ENCODE measurements at regions of chr17 and their contacts with region 1.

Region 1: DNA sequence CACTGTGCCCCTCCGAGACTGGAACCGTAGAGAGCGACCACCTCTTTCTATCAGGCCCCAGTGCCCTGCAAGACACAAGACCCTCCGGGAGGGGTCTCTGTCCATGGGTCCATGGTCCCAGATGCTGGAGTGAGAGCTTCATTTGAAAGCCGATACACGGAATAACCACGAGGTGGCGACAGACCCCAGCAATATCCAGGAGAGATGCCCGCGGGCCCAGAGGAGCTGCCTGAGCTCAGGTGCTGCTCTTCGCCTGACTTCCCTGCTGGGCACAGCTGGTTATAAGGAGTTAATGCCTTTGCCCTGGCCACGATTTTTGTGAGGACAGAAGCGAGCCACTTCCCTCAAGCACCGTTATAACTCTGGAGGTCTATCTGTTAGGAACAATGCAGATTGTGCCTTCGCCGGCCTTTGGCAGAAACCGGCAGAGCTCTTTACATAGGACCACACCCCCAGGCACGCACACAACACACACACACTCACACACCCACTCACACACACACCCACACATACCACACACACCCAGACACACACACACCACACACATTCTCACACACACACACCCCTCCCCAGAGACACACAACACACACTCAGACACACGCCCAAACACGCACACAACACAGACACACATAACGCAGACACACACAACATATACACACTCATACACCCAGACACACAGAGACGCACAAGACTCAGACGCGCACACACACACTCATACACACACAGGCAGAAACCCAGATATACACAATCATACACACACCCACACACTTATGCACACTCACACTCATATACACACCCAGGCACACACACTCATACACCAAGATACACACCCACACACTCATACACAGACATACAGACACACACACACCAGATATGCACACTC is 436.4 kb downstream of the SOX9 start:
- DNase-seq: no peak
- H3K4me3 ChIP-seq: no peak overlapping the region
- H3K27ac ChIP-seq: no peak overlapping the region
- H3K27me3 ChIP-seq: no peaks in the 10 kb centered on the region
- CTCF ChIP-seq: peak; percentile 91

Region 2: DNA sequence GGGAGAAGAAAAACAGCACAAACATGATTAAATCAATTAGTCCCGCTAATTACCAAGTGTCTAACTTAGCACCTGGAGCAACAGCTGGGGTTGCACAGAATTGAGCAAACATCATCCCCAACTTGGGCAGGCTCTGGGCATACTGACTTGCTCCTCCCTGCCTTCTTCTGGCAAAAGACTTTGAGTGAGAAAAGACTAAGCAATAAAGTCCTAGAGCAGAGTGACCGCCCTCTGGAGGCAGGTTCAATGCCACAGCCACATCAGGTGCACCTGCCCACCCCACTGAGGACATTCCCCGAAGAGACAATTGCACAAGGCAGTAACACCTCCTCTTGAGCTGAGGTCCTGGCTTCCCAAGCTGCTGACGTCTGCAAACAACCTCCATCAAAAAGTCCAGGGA is 78.1 kb before region 1 on chr17:
- CTCF ChIA-PET with region 1: no interaction called
- POLR2A ChIA-PET with region 1: no interaction called
- DNase-seq: no peak
- H3K4me3 ChIP-seq: no peak overlapping the region
- H3K27ac ChIP-seq: no peak overlapping the region
- H3K27me3 ChIP-seq: peaks cover 2% of the 10 kb centered on the region
- CTCF ChIP-seq: no peak

Region 3: DNA sequence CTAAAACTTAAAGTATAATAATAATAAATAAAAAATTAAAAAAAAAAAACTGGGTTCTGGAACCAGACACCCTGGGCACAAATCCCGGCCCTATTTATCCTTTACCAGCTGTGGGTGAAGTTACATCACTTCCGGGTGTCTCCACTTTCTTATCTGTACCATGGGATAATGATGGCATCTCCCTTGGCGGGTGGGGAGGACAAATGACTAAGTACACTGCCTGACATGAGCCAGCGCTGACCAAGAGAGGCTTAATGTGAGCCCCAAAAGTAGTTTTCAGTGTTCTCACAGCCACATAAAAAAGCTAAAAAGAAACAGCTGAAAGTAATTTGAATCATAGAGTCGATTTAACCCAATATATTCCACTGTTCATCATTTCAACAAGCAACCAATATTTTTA is 11.4 kb before region 1 on chr17:
- CTCF ChIA-PET with region 1: interaction called, 13 read pairs
- POLR2A ChIA-PET with region 1: no interaction called
- DNase-seq: no peak
- H3K4me3 ChIP-seq: no peak overlapping the region
- H3K27ac ChIP-seq: no peak overlapping the region
- H3K27me3 ChIP-seq: no peaks in the 10 kb centered on the region
- CTCF ChIP-seq: no peak

Region 4: GRCh38 chr17:72580321-72581127 is 23.3 kb after region 1 on chr17:
- CTCF ChIA-PET with region 1: interaction called, 26 read pairs
- POLR2A ChIA-PET with region 1: no interaction called
- DNase-seq: no peak
- H3K4me3 ChIP-seq: no peak overlapping the region
- H3K27ac ChIP-seq: no peak overlapping the region
- H3K27me3 ChIP-seq: no peaks in the 10 kb centered on the region
- CTCF ChIP-seq: no peak

Region 5: DNA sequence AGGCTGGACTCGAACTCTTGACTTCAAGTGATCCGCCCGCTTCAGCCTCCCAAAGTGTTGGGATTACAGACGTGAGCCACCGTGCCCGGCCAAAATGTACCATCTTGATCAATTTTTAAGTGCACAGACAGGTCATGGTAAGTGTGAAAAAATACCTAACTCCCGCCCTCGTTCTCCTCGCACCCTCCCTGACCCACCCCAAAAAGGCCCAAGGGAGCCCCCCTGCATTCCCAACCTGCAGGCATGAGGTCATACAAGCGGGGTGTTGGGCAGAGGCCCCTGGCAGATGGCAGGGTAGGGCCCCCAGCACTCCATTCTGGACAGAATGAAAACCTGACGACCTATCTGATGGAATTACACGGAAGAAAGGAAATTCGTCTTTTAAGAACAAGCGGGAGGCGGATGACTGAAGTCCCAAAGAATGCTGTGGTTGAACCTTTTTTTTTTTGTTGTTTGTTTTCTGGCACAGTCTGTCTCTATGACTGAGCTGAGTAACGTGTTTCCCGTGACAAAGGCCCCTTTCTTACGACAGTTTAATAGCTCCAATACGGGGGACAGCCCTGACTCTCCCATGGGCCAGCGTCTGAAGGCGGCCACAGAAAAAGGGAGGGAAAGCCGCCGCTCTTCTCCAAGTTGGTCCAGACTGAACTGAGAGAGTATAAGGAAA is 158.9 kb after region 1 on chr17:
- CTCF ChIA-PET with region 1: interaction called, 71 read pairs
- POLR2A ChIA-PET with region 1: interaction called, 6 read pairs
- DNase-seq: peak; percentile 78
- H3K4me3 ChIP-seq: no peak overlapping the region
- H3K27ac ChIP-seq: peak overlapping the region; percentile 90
- H3K27me3 ChIP-seq: no peaks in the 10 kb centered on the region
- CTCF ChIP-seq: no peak

Region 6: DNA sequence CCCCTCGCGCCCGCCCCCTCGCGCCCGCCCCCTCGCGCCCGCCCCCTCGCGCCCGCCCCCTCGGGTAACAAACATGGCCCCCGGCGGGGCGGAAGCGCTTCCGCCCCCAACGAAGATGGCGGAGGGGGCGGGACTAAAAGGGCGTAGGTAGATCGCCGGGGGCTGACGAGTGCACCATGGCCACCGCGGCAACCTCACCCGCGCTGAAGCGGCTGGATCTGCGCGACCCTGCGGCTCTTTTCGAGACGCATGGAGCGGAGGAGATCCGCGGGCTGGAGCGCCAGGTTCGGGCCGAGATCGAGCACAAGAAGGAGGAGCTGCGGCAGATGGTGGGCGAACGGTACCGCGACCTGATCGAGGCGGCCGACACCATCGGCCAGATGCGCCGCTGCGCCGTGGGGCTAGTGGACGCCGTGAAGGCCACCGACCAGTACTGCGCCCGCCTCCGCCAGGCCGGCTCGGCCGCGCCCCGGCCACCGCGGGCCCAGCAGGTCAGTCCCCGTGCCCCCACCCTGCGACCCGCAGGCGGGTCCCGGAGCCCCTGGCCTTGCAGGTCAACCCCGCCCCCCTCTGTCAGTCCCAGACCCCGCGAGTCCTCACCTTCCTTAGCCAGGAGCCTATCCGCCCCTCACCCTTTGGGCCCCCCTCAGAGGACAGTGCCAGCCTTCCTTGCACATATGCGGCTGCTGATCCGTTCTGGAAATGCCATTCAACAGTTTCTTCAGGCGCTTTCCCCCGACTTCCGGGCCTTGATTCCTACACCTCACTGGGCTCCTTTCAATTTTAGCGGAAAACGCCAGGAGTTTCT is 635.9 kb after region 1 on chr17 and contains the start of gene COG1:
- CTCF ChIA-PET with region 1: interaction called, 32 read pairs
- POLR2A ChIA-PET with region 1: no interaction called
- DNase-seq: peak; percentile 59
- H3K4me3 ChIP-seq: peak within 1 kb of the TSS; percentile 93
- H3K27ac ChIP-seq: peak within 1 kb of the TSS; percentile 84
- H3K27me3 ChIP-seq: no peaks in the 10 kb centered on the region
- CTCF ChIP-seq: no peak
- polyA plus RNA-seq, gene COG1: 30.2 and 36.9 TPM in 2 replicates

Region 7: DNA sequence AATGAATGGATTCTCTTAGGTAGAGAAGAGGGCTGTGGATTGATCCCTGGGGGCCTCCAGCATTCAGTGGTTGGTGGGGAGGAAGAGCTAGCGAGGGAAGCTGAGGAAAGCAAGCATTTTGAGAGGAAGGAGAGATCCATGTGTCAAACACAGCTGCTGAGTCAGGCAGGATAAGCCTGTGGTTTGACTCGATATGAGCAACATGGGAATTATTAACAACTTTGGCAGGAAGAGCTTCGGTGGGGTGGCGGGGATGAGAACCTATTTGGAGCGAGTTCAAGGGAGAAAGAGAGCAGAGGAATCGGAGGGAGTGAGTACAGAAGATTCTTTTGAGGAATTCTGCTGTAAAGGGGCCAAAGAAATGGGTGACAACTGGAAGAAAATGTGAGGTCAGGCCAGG is 814.1 kb after region 1 on chr17:
- CTCF ChIA-PET with region 1: interaction called, 10 read pairs
- POLR2A ChIA-PET with region 1: no interaction called
- DNase-seq: peak; percentile 73
- H3K4me3 ChIP-seq: no peak overlapping the region
- H3K27ac ChIP-seq: no peak overlapping the region
- H3K27me3 ChIP-seq: peaks cover 24% of the 10 kb centered on the region
- CTCF ChIP-seq: no peak